Activated naive CD4-positive, alpha-beta T cell treated with anti-CD3 and anti-CD28 coated beads for 36 hours (primary cell): ENCODE measurements at regions of chr16 and their contacts with region 1.

Region 1: GRCh38 chr16:26598061-26598460 is 468.7 kb upstream of the C16orf82 start:
- DNase-seq: peak; percentile 86
- H3K4me3 Mint-ChIP-seq: peak overlapping the region; percentile 17
- H3K27ac Mint-ChIP-seq: peak overlapping the region; percentile 82
- H3K4me1 Mint-ChIP-seq: peaks cover 48% of the 10 kb centered on the region
- H3K27me3 Mint-ChIP-seq: peaks cover 17% of the 10 kb centered on the region

Region 2: DNA sequence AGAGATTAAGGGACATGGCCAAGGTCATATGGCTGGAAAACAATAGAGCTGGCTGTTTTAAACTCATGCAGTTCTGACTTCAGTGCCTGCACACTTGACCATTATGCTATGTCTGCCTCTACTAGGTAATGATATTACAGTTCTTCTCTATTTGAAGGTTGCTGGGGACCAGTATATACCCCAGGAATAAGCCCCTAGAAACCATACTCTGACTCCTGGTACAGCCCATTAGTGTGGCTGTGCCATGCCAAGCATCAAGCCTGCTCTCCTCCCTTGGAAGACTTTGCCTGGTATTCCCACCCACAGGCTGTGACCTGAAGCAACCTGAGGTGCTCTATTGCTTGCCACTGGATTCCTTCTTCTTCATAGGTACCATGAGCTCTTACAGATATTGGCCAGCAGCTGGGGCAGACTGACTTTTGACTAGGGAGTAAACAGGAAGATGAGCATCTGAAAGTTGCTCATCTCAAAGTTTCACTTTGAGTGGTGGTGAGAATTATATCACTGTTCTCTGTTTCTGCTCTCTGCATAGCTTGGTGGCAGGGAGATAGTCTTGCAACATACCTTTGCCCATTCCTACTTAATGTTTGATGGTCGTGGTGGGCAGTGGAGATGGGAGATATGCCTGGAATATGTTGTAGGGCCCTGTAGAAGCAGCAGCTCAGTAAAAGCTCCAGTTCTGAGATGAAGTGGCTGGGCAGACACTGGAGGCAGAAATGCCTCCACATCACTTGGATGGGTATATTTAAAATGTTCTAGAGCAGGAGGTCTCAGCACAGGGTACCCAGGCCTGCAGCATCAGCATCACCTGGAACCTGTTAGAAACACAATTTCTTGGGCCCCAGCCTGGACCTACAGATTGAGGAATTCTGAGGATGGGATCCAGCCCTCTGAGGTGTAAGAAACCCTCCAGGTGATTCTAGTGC is 631.6 kb before region 1 on chr16:
- CTCF ChIA-PET with region 1: no interaction called
- intact Hi-C with region 1: loop called (anchors 5 kb)
- DNase-seq: peak; percentile 61
- H3K4me3 Mint-ChIP-seq: no peak overlapping the region
- H3K27ac Mint-ChIP-seq: no peak overlapping the region
- H3K4me1 Mint-ChIP-seq: peaks cover 10% of the 10 kb centered on the region
- H3K27me3 Mint-ChIP-seq: peaks cover 2% of the 10 kb centered on the region

Region 3: GRCh38 chr16:26578748-26579147 is 19.3 kb before region 1 on chr16:
- CTCF ChIA-PET with region 1: no interaction called
- intact Hi-C with region 1: no loop called
- DNase-seq: no peak
- H3K4me3 Mint-ChIP-seq: no peak overlapping the region
- H3K27ac Mint-ChIP-seq: no peak overlapping the region
- H3K4me1 Mint-ChIP-seq: no peaks in the 10 kb centered on the region
- H3K27me3 Mint-ChIP-seq: peaks cover 19% of the 10 kb centered on the region

Region 4: GRCh38 chr16:26665162-26665939 is 67.3 kb after region 1 on chr16:
- CTCF ChIA-PET with region 1: interaction called, 3 read pairs
- intact Hi-C with region 1: loop called (anchors 1 kb)
- DNase-seq: peak; percentile 54
- H3K4me3 Mint-ChIP-seq: no peak overlapping the region
- H3K27ac Mint-ChIP-seq: peak overlapping the region; percentile 20
- H3K4me1 Mint-ChIP-seq: peaks cover 18% of the 10 kb centered on the region
- H3K27me3 Mint-ChIP-seq: peaks cover 17% of the 10 kb centered on the region

Region 5: DNA sequence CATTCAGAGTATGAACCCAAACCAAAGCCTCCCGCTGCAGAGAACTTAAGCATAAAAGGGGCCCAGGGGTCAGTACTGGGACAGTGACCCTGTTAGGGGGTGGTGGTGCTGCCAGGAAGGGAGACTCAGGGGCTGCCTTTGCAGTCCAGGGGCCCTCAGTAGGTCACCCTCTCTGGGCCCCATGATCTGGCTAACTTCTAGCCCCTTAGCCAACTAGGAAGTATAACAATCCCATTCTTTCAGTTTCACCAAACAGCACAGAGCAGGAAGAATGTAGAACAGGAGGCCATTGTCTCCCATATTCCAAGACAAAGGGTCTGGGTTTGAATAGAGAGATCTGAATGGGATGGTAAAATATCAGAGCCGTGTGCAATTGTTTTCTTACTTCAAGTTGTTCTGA is 90.0 kb after region 1 on chr16:
- CTCF ChIA-PET with region 1: no interaction called
- intact Hi-C with region 1: no loop called
- DNase-seq: no peak
- H3K4me3 Mint-ChIP-seq: no peak overlapping the region
- H3K27ac Mint-ChIP-seq: no peak overlapping the region
- H3K4me1 Mint-ChIP-seq: peaks cover 3% of the 10 kb centered on the region
- H3K27me3 Mint-ChIP-seq: no peaks in the 10 kb centered on the region

Region 6: DNA sequence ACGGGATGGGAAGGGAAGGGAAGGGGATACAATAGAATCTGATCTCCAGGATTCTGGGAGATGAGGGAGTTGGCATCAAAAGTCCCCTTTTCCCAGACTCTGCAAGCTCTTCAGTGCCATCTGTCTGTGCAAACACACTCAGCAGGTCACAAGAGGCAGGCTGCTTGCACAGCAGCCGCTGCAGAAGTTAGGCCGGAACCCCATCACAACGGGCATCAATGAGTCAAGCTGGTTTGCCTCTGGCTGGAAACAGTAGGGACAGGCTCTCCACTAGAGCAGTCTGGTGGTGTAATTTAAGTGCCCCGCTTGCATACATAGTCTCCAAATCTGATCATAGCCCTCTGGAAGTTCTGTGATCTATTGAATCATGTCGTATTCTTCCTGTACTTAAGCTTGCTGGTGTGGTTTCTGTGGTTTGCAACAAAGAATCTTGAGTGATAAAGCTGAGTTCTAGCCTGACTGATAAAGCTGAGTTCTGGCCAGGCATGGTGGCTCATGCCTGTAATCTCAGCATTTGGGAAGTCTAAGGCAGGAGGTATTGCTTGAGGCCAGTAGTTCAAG is 571.5 kb after region 1 on chr16:
- CTCF ChIA-PET with region 1: no interaction called
- intact Hi-C with region 1: loop called (anchors 1 kb)
- DNase-seq: peak; percentile 92
- H3K4me3 Mint-ChIP-seq: no peak overlapping the region
- H3K27ac Mint-ChIP-seq: peak overlapping the region; percentile 87
- H3K4me1 Mint-ChIP-seq: peaks cover 55% of the 10 kb centered on the region
- H3K27me3 Mint-ChIP-seq: no peaks in the 10 kb centered on the region

Region 7: GRCh38 chr16:27408012-27408601 is 810.0 kb after region 1 on chr16:
- CTCF ChIA-PET with region 1: no interaction called
- intact Hi-C with region 1: loop called (anchors 1 kb)
- DNase-seq: peak; percentile 78
- H3K4me3 Mint-ChIP-seq: peak overlapping the region; percentile 98
- H3K27ac Mint-ChIP-seq: peak overlapping the region; percentile 100
- H3K4me1 Mint-ChIP-seq: peaks cover 65% of the 10 kb centered on the region
- H3K27me3 Mint-ChIP-seq: no peaks in the 10 kb centered on the region